ENCODE measurements at regions of chr7 and their contacts with region 1.

Region 1: GRCh38 chr7:29496355-29497020 is 67.1 kb upstream of the PRR15 start:
- DNase-seq: no peak
- ATAC-seq: no peak
- H3K4me3 ChIP-seq: no peak overlapping the region
- H3K27ac ChIP-seq: no peak overlapping the region
- H3K4me1 ChIP-seq: no peaks in the 10 kb centered on the region
- H3K27me3 ChIP-seq: no peaks in the 10 kb centered on the region; the same call in 1 of the 2 replicates
- CTCF ChIP-seq: no peak

Region 2: GRCh38 chr7:29319719-29320521 is 176.6 kb before region 1 on chr7:
- CTCF ChIA-PET with region 1: no interaction called
- POLR2A ChIA-PET with region 1: no interaction called
- in situ Hi-C with region 1: no loop called
- intact Hi-C with region 1: no loop called
- DNase-seq: no peak
- ATAC-seq: no peak
- H3K4me3 ChIP-seq: no peak overlapping the region
- H3K27ac ChIP-seq: no peak overlapping the region
- H3K4me1 ChIP-seq: no peaks in the 10 kb centered on the region
- H3K27me3 ChIP-seq: peaks cover 23% of the 10 kb centered on the region
- CTCF ChIP-seq: no peak

Region 3: DNA sequence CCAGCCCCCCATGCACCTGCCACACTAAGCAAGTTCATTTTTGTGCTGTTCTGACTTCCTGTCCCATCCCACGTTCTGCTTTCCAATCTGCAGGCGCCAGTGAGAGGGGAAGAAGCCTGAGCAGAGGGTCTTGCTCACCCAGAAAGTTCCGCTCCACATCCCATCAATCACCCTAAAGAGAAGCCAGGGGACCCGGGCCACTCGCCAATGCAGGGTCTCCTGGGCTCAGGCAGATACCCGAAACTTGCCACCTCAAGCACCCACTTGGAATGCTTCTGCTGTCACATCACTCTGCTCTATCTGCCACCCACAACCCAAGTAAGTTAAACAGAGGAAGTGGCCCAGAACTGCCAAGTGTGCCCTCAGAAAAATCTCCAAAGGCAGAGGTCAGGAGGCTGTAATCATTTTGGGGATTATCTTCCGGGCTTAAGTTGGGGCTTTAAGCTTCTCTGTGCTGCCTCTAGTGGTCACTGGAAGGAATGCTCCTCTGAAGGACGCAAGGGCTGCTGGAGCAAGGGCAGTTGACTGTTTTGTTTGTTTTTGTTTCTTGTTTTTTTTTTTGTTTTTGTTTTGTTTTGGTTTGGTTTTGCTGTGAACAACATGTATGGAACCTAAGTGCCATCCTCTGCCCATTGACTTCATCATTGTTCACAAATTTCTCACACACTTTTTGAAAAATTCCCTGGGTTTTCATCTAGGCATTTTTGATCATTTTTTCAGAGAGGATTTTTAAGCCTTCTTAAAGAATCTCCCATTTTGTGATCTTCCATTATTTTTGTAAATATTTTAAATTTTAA is 92.6 kb after region 1 on chr7:
- CTCF ChIA-PET with region 1: interaction called, 10 read pairs
- POLR2A ChIA-PET with region 1: no interaction called
- in situ Hi-C with region 1: no loop called
- intact Hi-C with region 1: no loop called
- DNase-seq: peak; percentile 65
- ATAC-seq: peak; percentile 71; the same call in 1 of the 2 replicates
- H3K4me3 ChIP-seq: no peak overlapping the region
- H3K27ac ChIP-seq: no peak overlapping the region
- H3K4me1 ChIP-seq: no peaks in the 10 kb centered on the region
- H3K27me3 ChIP-seq: no peaks in the 10 kb centered on the region
- CTCF ChIP-seq: peak; percentile 97